Ascending aorta (tissue), 2 donors: ENCODE measurements at regions of chr12 and their contacts with region 1.

Region 1: DNA sequence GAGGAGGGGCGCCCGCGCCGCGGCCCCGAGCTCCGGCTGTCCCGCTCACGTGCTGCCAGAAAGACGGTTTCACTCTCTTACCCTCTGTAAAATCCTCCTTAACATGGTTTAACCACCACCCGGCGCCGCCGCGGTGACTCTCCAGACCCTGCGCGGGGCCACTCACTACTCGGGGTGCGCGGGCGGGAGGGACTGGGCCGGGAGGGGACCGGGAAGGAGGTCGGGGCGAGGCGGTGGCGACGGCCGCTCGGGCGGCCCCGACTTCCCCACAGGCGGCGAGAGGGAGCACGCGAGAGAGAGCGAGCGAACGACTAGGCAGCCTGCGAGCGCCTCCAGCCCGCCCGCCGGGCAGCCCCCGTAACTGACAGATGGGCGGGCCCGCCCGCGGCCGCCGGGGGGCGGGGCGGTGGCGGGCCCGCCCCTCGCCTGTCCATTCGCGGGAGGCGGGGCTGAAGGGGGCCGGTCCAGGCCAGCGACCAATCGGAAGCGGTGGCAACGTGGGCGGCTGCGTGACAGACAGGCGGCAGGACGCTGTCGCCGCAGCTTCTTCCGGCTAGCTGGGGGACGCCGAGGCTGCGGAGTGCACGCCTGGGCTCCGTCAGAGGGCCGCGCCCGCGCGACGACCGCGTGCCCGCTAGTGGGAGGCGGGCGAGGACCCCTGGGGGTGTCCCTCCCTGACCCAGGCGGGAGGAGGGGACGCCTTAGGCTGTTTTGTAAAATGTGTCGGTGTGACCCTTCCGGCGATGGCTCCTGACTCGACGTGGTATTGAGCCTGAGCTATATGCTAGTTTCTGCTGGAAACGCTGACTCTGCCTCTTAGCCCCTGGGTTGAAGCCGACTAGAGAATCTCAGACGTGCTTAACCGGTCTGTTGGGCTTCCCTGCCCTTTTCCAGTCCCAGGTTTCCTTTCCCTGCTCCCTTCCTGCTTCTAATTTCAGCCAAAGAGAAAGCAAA is at the start of gene EEA1:
- DNase-seq: peak; percentile 82 to 97
- H3K4me3 ChIP-seq: peak within 1 kb of the TSS; percentile 69 to 100
- H3K27ac ChIP-seq: peak within 1 kb of the TSS; percentile 98 to 99
- H3K4me1 ChIP-seq: peaks cover 5 to 13% of the 10 kb centered on the region in 2 donors
- H3K27me3 ChIP-seq: no peaks in the 10 kb centered on the region
- CTCF ChIP-seq: peak; percentile 11 to 36 (median 30)
- total RNA-seq, gene EEA1: 10.9 TPM

Region 2: DNA sequence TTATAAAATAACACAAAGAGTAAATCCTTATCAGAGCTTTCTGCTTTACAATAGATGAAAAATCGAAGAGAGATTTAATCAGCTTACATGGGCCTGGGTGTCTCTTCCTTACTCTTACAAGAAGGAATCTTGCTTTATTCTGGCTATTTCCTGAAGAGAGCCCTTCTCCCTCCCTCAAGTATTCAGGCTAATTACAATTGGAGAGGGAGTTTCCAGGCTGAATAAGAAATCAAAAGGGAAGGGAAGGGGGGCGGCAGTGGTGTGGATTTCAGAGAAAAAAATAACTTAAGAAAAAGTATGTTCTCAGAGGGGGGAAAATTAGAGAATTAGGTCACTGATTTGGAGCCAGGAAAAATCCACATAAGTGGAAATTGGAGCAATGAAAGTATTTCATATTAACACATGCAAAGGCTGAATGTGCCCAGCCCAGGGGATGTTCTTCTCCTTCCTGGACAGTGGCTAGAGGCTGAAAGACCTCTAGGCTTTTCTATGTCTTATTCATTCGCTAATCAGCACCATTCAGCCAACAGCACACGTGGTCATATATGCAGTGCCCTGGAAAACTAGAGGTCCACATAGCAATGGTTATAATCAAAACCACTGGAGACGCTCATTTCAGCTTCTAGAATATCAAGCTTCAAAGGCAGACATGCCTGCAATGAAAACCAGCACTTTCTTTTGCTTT is 624.7 kb before region 1 on chr12:
- intact Hi-C with region 1: no loop called
- DNase-seq: no peak
- H3K4me3 ChIP-seq: no peak overlapping the region
- H3K27ac ChIP-seq: no peak overlapping the region
- H3K4me1 ChIP-seq: no peaks in the 10 kb centered on the region
- H3K27me3 ChIP-seq: no peaks in the 10 kb centered on the region
- CTCF ChIP-seq: no peak

Region 3: DNA sequence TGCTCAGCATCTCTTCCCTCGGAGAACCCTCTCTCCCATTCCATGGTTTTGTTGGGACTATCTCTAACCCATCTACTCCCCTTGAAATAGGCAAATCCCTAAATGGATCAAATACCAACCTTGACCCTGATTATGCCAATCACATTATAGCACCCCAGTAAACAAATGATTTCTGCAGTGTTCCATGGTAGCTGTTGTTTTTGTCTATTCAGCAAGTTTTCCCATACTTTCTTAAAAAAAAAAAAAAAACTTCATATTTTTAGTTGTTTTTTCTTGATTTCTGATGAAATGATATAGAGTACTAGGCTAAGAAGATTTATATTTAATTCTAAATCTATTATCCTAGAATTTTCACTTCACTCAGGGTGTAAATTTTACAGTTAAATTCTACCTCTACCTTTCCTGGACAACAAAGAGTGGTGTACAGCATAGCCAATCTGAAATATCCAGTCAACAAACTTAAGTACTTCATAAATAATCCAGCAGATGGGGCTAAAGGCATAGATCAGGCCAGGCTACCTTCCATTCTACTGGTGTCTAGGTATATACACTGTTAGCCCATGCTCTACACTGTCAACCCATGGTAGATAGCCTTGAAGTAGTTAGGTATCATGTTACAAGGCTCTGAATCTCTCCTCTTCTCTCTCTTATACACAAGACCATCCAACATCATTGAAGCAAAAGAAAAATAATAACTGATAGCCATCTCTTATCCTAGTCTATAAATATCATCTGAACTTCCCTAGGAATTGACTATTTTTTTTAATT is 144.3 kb before region 1 on chr12:
- intact Hi-C with region 1: loop called (anchors 5 kb)
- DNase-seq: no peak
- H3K4me3 ChIP-seq: no peak overlapping the region
- H3K27ac ChIP-seq: peak overlapping the region in 1 of 2 donors; percentile 17
- H3K4me1 ChIP-seq: peaks cover 0 to 7% of the 10 kb centered on the region in 2 donors
- H3K27me3 ChIP-seq: no peaks in the 10 kb centered on the region
- CTCF ChIP-seq: peak; percentile 35 to 52 (median 38)

Region 4: DNA sequence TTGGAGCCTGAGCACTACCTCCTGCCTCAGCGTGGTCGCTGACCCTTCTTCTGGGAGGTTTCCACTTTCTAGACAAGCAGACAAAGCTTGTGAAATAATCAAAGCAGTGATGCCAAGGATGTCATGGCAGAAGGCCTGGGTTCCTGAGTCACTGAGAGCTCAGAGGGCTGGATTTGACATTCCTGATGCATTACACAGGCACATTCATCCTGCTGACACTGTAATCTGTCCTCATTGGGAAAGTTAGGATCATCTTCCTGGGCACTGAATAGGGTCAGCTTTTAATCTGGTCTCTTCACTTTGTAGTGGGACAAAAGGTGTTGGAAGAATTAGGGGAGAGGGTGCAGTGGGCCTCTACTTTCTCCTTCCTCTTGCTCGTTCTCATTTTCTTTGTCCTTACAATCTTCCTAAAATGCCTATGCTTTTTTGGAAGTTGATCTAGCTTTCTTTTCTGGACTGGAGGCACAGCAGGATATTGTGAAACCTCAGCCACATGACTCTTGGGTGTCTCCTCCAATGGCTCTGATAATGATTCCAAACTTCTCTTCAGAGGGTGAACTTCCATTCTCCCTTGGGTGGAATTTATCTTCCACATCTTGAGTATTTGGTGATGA is 29.7 kb before region 1 on chr12:
- intact Hi-C with region 1: loop called (anchors 1 kb)
- DNase-seq: peak; percentile 28 to 93
- H3K4me3 ChIP-seq: peak overlapping the region; percentile 9 to 33
- H3K27ac ChIP-seq: peak overlapping the region; percentile 73 to 82
- H3K4me1 ChIP-seq: peaks cover 5 to 7% of the 10 kb centered on the region in 2 donors
- H3K27me3 ChIP-seq: no peaks in the 10 kb centered on the region
- CTCF ChIP-seq: no peak

Region 5: DNA sequence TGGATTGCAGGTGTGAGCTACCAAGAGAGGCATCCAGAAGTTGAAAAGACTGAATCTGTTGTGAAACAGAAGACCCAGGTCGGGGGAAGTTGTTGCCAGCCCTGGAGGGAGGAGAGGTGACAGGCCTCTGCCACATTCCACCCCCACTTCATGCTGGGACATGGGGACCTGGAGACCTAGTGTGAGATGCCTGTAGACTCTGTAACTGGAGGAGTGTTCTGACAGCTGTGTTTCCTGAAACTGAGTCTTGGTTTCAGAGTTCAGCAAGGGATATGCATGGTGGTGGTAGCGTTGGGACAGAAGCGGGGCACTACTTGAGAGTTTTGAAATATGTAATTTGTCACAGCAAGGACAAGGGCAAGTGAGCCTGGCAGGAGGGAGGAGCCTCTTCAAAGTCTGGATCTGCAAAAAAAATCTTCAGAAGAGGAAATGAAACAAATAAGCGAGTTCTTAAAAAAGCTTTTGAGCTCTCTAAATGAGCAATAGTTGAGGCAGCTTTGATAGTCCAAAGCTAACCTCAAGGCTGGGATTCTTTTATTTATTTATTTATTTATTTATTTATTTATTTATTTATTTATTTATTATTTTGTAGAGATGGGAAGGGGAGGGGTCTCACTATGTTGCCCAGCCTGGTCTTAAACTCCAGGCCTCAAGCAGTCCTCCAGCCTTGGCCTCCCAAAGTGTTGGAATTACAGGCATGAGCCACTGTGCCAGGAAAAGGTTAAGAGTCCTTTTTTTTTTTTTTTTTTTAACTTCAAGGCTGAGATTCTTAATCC is 58.8 kb after region 1 on chr12:
- intact Hi-C with region 1: no loop called
- DNase-seq: peak in 1 of 2 donors; percentile 69
- H3K4me3 ChIP-seq: no peak overlapping the region
- H3K27ac ChIP-seq: peak overlapping the region; percentile 46 to 50
- H3K4me1 ChIP-seq: peaks cover 0 to 4% of the 10 kb centered on the region in 2 donors
- H3K27me3 ChIP-seq: no peaks in the 10 kb centered on the region
- CTCF ChIP-seq: no peak